Dendritic cell treated with granulocyte-macrophage colony-stimulating factor and Interleukin-4, amounts not matched to agents 40 ng/mL and 50 ng/mL, for 4 days (primary cell): ENCODE measurements at regions of chr11 and their contacts with region 1.

Region 1: DNA sequence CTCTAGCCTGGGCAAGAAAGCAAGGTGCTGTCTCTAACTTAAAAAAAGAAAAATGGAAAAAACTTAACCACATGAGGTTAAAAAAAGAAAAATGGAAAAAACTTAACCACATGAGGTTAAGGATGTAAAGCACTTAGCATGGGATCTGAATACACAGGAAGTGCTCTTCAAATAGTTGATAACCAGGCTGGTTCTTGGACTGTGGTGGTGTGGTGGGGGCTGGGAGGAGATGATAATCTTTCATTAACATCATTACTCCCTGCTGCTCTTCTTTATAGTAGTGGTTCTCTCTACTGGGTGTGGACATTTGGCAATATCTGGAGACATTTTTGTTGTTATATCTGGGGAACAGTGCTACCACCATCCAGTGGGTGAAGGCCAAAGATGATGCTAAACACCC is 88.4 kb downstream of the TTC17 start:
- H3K4me3 Mint-ChIP-seq: no peak overlapping the region
- H3K27ac Mint-ChIP-seq: no peak overlapping the region
- H3K4me1 Mint-ChIP-seq: no peaks in the 10 kb centered on the region
- H3K27me3 Mint-ChIP-seq: no peaks in the 10 kb centered on the region

Region 2: DNA sequence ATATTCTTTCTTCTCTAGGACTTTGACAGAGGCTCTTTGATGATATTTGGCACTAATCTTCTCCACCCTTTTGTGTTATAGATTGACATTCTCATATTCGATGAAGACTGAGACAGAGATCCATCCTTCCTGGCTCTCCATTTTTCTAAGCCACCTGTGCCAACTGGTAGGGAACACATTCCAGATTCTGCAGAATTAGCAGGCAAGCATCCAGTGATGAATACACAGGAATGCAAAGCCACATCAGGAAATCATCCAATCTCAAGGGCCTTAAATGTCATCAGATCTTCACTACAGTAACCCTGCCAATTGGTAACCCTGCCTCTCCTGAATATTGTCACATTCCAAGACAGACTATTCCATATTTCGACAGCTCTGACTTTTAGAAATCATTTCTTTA is 853.7 kb before region 1 on chr11:
- intact Hi-C with region 1: no loop called
- H3K4me3 Mint-ChIP-seq: no peak overlapping the region
- H3K27ac Mint-ChIP-seq: no peak overlapping the region
- H3K4me1 Mint-ChIP-seq: no peaks in the 10 kb centered on the region
- H3K27me3 Mint-ChIP-seq: no peaks in the 10 kb centered on the region

Region 3: DNA sequence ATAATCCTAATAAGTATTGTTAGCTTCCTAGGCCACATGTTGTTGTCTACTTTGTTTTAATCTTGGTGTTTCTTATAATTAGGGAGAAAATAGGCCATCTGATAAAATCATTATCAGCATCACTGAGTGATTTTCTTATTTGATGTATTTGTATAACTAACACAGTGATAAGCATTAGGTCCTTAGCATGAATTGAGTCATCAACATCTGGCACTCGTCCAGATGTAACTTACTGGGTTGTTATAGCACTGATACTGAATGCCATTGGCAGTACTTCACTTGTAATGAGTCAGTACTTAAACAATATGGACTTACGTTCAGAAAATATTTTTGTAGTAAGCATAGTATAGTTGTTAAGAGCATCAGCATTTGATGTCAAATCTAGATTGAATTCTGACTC is 119.2 kb before region 1 on chr11:
- intact Hi-C with region 1: loop called (anchors 5 kb)
- H3K4me3 Mint-ChIP-seq: no peak overlapping the region
- H3K27ac Mint-ChIP-seq: no peak overlapping the region
- H3K4me1 Mint-ChIP-seq: no peaks in the 10 kb centered on the region
- H3K27me3 Mint-ChIP-seq: no peaks in the 10 kb centered on the region

Region 4: DNA sequence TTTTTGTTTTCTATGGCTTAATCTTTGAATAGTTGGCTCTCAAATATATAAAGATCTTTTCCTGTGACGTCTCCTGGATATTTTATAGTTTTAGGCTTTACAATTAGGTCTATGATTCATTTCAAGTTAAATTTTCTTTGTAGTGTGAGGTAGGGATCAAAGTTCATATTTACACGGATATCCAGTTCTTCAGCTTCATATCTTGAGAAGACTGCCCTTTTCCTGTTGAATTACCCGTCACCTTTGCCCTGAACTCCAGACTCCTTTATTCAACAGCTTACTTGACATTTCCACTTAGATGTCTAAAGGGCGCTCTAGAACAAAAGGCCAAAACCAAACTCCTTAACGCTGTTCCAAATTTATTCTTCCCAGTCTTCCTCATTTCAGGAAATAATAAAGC is 36.8 kb before region 1 on chr11:
- intact Hi-C with region 1: loop called (anchors 1 kb)
- H3K4me3 Mint-ChIP-seq: no peak overlapping the region
- H3K27ac Mint-ChIP-seq: no peak overlapping the region
- H3K4me1 Mint-ChIP-seq: no peaks in the 10 kb centered on the region
- H3K27me3 Mint-ChIP-seq: no peaks in the 10 kb centered on the region

Region 5: DNA sequence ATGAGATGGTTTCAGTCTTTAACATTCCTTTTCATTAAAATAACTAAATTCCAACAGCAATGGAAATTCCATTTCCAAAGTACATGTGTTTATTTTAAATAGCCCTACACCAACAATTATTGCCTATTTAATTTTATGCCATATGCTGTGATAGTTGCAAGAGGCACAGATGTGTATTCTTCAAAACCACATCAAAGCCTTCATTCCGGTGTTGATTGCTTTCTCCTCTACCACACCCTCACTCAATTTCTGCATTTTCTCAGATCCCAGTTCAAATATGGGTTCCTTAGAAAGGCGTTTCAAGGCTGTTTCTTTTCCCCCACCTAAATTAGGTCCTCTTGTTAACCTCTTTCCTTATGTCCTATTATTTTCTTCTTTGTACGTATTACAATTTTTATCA is 227.4 kb after region 1 on chr11:
- intact Hi-C with region 1: no loop called
- H3K4me3 Mint-ChIP-seq: no peak overlapping the region
- H3K27ac Mint-ChIP-seq: no peak overlapping the region
- H3K4me1 Mint-ChIP-seq: peaks cover 7% of the 10 kb centered on the region
- H3K27me3 Mint-ChIP-seq: peaks cover 17% of the 10 kb centered on the region